Activated CD4-positive, alpha-beta T cell treated with anti-CD3 and anti-CD28 coated beads for 36 hours (primary cell): ENCODE measurements at regions of chr17 and their contacts with region 1.

Region 1: DNA sequence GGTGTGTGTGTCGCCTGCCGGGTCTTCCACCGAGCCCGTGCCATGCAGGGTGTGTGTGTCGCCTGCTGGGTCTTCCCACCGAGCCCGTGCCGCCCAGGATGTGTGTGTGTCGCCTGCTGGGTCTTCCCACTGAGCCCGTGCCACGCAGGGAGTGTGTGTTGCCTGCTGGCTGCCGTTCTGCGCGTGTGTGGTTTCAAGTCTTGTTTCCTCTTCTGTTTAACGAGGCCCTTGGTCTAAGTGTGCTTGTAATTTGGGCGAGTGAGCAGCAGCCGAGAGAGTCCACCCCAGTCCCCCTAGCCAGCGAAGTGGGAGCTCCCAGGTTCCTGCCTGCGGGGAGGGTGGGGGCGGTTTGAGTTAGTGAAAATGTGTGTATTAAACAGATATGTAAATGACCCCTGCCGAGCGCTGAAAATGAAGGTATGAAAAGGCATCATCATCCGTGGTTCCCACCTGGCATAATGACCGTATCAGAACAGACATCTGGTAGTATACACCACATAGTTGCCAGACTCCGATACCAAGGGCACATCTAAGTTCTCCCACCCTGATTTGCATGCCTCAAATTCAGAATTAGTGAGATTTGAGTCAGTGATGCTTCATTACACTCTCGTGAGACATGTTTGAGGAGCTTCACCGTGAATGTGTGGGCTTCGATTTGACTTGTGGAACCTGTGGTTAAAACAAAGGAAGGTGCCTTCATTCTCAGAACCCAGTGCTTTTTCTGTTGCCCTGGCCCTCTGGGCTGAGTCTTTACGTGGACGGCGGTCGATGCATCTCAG is 114.5 kb upstream of the CHMP6 start:
- DNase-seq: peak; percentile 84
- ATAC-seq: peak; percentile 93
- H3K4me3 Mint-ChIP-seq: peak overlapping the region; percentile 51
- H3K27ac Mint-ChIP-seq: peak overlapping the region; percentile 99
- H3K4me1 Mint-ChIP-seq: peaks cover 68% of the 10 kb centered on the region
- H3K27me3 Mint-ChIP-seq: no peaks in the 10 kb centered on the region

Region 2: GRCh38 chr17:80720610-80721577 is 156.2 kb before region 1 on chr17:
- CTCF ChIA-PET with region 1: no interaction called
- POLR2A ChIA-PET with region 1: no interaction called
- intact Hi-C with region 1: loop called in 1 of 2 experiments (anchors 1 kb)
- DNase-seq: peak; percentile 87
- ATAC-seq: peak; percentile 94
- H3K4me3 Mint-ChIP-seq: peak overlapping the region; percentile 46
- H3K27ac Mint-ChIP-seq: peak overlapping the region; percentile 88
- H3K4me1 Mint-ChIP-seq: peaks cover 51% of the 10 kb centered on the region
- H3K27me3 Mint-ChIP-seq: no peaks in the 10 kb centered on the region

Region 3: DNA sequence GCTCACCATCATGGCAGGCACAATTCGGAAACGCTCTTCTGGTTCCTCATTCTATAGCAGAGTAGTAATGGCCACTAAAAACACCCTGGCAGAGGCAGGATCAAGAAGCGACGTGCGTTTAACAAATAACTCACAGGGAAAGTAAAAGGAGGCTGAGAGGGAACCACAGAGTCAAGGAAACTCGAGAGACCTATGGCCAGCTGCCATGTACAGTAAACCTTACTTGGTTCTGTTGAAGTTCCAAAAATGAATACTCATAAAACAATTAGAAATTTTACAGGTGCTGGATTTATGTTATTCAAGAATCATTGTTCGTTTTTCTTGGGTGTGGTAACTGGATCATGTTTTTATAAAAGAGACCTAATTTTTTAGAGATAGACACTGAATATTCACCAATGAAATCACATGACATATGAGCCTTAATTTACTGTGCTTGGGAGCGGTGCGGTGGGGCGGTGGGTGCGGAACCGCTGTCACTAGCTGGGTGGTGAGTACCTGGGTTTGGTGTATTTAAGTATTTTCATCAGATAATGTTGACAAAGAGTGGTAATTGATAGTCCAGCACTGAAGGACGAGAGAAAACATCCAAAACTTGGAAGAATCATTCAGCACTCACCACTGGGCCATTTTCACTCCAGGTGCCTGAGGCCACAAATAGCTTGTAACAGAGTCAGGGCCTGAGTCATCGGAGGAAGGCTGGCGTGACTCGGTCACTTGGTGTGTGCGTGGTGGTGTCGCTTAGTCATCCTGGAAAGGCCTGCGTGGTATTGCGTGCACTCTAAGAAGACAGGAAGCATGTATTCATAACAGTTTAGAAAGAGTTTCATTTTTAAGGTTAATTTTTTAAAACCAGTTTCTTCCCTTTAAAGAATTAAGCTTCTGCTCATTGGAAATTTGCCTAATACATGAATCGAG is 20.9 kb before region 1 on chr17:
- CTCF ChIA-PET with region 1: interaction called, 4 read pairs
- POLR2A ChIA-PET with region 1: interaction called, 4 read pairs
- intact Hi-C with region 1: loop called (anchors 1 kb)
- DNase-seq: peak; percentile 95
- ATAC-seq: peak; percentile 98
- H3K4me3 Mint-ChIP-seq: peak overlapping the region; percentile 28
- H3K27ac Mint-ChIP-seq: peak overlapping the region; percentile 92
- H3K4me1 Mint-ChIP-seq: peaks cover 57% of the 10 kb centered on the region
- H3K27me3 Mint-ChIP-seq: no peaks in the 10 kb centered on the region